T-cell (primary cell): ENCODE measurements at regions of chr9 and their contacts with region 1.

Region 1: GRCh38 chr9:75238311-75238978 is 150.1 kb downstream of the OSTF1 start:
- DNase-seq: peak in 26 of 35 experiments; percentile 2 to 69 (median 22)
- ATAC-seq: peak; percentile 70 to 87 (median 78)
- H3K4me3 ChIP-seq: no peak overlapping the region
- H3K4me3 Mint-ChIP-seq: no peak overlapping the region
- H3K27ac ChIP-seq: no peak overlapping the region
- H3K27ac Mint-ChIP-seq: no peak overlapping the region
- H3K4me1 ChIP-seq: peaks cover 0 to 2% of the 10 kb centered on the region in 2 experiments
- H3K4me1 Mint-ChIP-seq: no peaks in the 10 kb centered on the region
- H3K27me3 ChIP-seq: no peaks in the 10 kb centered on the region
- H3K27me3 Mint-ChIP-seq: no peaks in the 10 kb centered on the region

Region 2: GRCh38 chr9:75200892-75201470 is 37.5 kb before region 1 on chr9:
- CTCF ChIA-PET with region 1: interaction called, 5 to 13 read pairs
- POLR2A ChIA-PET with region 1: no interaction called
- DNase-seq: peak in 2 of 35 experiments; percentile 13 to 66
- ATAC-seq: peak in 1 of 4 experiments; percentile 37
- H3K4me3 ChIP-seq: no peak overlapping the region
- H3K4me3 Mint-ChIP-seq: no peak overlapping the region
- H3K27ac ChIP-seq: no peak overlapping the region
- H3K27ac Mint-ChIP-seq: no peak overlapping the region
- H3K4me1 ChIP-seq: no peaks in the 10 kb centered on the region
- H3K4me1 Mint-ChIP-seq: peaks cover 0 to 3% (median 0%) of the 10 kb centered on the region in 3 donors
- H3K27me3 ChIP-seq: no peaks in the 10 kb centered on the region
- H3K27me3 Mint-ChIP-seq: no peaks in the 10 kb centered on the region